Psoas muscle (tissue), 8 donors: ENCODE measurements at regions of chr22 and their contacts with region 1.

Region 1: DNA sequence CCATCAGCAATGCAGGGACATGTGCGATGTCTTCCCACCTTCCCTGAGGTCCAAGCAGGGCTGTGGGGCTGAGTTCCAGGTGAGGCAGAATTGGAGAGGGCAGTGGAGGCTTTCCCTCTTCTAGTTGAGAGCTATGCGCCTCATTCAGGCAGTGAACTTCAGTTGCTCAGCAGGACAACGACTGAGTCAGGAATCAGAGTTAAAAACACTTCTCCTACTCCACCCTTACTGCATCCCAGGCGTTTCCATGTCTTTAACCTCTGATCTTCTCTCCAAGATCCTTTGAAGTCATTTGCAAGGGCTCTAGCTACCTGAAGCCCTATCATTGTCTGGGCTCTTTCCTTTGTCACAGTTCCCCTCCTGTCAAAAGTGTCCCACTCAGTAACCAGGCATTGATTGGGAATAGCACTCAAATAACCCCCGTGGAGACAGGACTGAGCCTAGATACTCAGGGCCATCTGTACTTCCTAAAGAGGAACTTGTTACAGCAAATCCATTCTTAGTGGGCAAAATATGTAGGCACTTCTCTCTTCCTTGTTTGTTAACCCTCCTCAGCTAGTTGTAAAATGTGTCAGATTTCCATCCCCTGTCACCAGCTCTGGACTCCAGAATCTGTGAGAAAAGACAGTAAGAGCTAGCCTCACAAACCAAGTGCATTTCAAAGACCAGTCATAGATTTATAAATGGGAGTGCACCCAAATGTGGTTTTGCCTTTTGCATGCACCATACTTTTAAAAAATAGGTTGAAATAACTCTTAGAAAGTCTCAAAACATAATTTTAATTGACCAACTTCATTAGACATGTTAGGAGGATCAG is 72.5 kb upstream of the MYO18B start:
- DNase-seq: no peak
- ATAC-seq: no peak
- H3K4me3 ChIP-seq: no peak overlapping the region
- H3K27ac ChIP-seq: no peak overlapping the region
- H3K4me1 ChIP-seq: no peaks in the 10 kb centered on the region
- H3K27me3 ChIP-seq: no peaks in the 10 kb centered on the region
- CTCF ChIP-seq: no peak

Region 2: GRCh38 chr22:25564320-25564978 is 105.0 kb before region 1 on chr22 and contains the start of gene GRK3:
- intact Hi-C with region 1: loop called in 1 of 2 experiments (anchors 10 kb)
- DNase-seq: peak; percentile 74 to 77
- ATAC-seq: peak; percentile 32 to 74 (median 62)
- H3K4me3 ChIP-seq: peak within 1 kb of the TSS; percentile 79
- H3K27ac ChIP-seq: peak within 1 kb of the TSS; percentile 16
- H3K4me1 ChIP-seq: no peaks in the 10 kb centered on the region
- H3K27me3 ChIP-seq: peaks cover 0 to 41% (median 5%) of the 10 kb centered on the region in 3 donors
- CTCF ChIP-seq: no peak
- total RNA-seq, gene GRK3: 1.3 to 2.0 (median 1.9) TPM

Region 3: DNA sequence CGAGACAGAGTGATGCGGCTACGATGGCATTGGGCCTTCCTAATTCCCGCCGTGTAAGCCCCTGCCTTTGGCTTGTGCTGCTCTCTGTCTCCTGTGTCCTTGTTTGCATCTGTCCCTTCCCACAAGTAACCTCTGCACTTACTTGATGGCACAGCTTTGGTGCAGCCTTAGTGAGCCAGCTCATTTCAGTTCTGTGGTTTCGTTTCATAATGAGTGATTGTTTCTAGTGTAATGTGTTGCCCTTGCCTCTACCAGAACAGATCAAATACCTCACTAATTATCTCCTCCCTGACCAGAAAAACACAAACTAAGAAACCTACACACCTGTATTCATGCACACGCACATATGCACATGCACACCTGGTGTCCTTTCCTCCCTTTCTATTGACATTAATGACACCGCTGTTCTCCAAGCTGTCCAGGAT is 46.1 kb before region 1 on chr22:
- intact Hi-C with region 1: no loop called
- DNase-seq: no peak
- ATAC-seq: no peak
- H3K4me3 ChIP-seq: no peak overlapping the region
- H3K27ac ChIP-seq: no peak overlapping the region
- H3K4me1 ChIP-seq: no peaks in the 10 kb centered on the region
- H3K27me3 ChIP-seq: no peaks in the 10 kb centered on the region
- CTCF ChIP-seq: no peak

Region 4: GRCh38 chr22:25702040-25702439 is 32.6 kb after region 1 on chr22:
- intact Hi-C with region 1: no loop called
- DNase-seq: no peak
- ATAC-seq: peak in 1 of 4 donors; percentile 68
- H3K4me3 ChIP-seq: no peak overlapping the region
- H3K27ac ChIP-seq: no peak overlapping the region
- H3K4me1 ChIP-seq: peaks cover 11% of the 10 kb centered on the region
- H3K27me3 ChIP-seq: no peaks in the 10 kb centered on the region
- CTCF ChIP-seq: peak; percentile 42